MCF 10A (cell line): ENCODE measurements at regions of chr7 and their contacts with region 1.

Region 1: DNA sequence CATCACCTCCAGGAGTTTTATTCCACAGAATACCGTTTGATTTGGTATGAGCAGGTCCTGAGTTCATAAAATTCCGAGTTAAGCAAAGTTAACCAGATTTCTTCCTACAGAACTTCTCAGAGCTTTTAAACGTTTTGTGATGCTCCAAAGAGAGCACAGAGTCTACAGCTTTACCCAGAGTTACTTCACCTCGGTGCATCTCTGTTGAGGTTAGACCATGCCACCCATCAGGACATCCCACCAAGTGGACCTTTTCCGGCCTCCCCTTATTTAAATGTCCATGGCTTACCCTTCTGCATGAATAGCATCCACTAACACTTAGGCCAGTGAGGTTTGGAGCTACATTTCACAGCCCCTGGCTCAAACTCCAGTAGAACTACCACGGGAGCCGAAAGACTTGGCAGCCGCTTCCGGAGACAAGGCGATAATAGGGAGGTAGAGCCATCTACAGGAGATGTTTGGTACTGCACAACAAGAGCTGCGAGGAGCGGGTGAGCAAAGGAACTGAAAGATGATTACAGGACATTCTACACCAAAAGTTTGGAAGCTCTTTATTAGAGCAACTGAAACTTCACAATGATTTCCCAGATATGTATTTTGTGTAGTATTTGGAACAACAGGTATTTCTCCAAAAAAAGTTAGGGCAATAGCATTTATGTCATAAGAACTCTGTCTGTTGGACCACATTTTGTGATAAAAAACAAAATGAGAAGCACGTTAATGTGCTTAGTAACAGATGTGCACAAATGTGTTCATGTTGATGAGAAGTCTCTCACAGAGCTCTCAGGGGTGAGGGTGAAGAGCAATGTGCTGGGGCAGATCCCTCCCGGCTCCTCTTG is 174.7 kb downstream of the HERPUD2 start:
- DNase-seq: peak; percentile 84
- H3K4me3 Mint-ChIP-seq: no peak overlapping the region
- H3K27ac Mint-ChIP-seq: no peak overlapping the region
- H3K4me1 Mint-ChIP-seq: no peaks in the 10 kb centered on the region
- H3K27me3 Mint-ChIP-seq: peaks cover 62% of the 10 kb centered on the region
- CTCF ChIP-seq: peak; percentile 83

Region 2: GRCh38 chr7:35424869-35425495 is 95.2 kb before region 1 on chr7:
- CTCF ChIA-PET with region 1: interaction called, 49 read pairs
- POLR2A ChIA-PET with region 1: no interaction called
- intact Hi-C with region 1: loop called (anchors 1 kb)
- DNase-seq: peak; percentile 60
- H3K4me3 Mint-ChIP-seq: no peak overlapping the region
- H3K27ac Mint-ChIP-seq: no peak overlapping the region
- H3K4me1 Mint-ChIP-seq: no peaks in the 10 kb centered on the region
- H3K27me3 Mint-ChIP-seq: peaks cover 38% of the 10 kb centered on the region
- CTCF ChIP-seq: peak; percentile 70

Region 3: DNA sequence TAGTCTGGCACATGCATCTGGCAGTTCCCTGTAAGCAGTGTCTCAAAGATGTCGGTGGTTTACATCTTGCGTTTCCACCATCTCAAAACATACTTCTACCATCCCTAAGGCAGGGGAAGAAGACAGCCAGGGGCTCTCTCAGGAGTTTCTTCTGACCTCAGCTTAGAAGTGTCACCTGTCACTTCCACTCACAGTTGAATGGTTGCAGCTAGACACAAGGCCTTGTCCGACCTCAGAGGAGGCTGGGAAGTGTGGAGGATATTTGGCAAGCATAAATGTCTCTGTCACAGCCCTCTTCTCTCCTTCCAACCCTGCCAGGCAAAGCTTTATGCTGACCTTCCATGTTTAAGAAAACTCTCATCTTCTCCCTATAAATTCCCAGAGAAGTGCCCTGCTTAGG is 18.5 kb before region 1 on chr7:
- CTCF ChIA-PET with region 1: interaction called, 10 read pairs
- POLR2A ChIA-PET with region 1: no interaction called
- intact Hi-C with region 1: no loop called
- DNase-seq: no peak
- H3K4me3 Mint-ChIP-seq: no peak overlapping the region
- H3K27ac Mint-ChIP-seq: no peak overlapping the region
- H3K4me1 Mint-ChIP-seq: no peaks in the 10 kb centered on the region
- H3K27me3 Mint-ChIP-seq: peaks cover 23% of the 10 kb centered on the region
- CTCF ChIP-seq: no peak

Region 4: DNA sequence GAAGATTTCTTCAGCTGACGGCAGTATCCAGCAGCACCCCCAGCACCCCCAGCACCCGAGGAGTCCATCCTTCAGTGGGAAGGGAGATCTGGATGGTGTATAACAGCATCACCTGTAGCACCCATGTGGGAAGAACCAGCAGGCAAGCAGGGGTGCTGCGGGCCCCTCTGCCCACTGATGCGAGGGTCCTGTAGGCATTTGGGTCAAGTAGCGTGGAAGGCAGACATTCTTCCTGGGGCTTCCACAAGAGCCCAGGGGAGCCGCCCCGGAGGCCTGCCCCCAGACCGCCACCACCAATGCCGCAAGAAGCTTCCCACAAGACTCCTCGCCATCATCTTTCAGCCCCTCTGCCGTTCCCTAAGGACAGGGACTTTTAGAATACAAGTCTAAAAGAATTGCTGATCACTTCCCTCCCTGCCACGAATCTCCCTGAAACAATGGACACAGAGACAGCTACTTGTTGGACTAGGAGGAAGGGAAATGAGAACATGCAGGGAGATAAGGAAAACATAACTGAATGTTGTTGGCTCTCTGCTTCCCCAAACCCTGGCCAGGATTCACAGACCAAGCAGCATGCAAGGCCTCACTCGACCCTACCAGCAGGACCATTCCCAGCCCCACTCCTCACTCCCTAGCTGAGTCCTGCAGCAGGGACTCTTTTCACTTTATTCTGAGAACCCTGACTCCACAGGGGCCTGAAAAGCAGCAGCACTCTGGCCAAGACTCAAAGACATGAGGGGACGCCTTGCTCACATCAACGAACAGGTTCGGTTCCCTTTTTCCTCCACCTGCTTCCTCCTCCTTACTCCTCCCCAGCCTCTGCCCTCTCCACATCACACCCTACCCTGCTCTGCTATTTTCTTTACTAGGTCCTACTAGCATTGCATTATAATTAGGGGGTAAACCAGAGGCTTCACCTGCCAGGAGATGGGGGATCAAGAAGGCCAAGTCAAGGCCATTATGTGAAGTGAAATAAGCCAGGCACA is 10.2 kb after region 1 on chr7:
- CTCF ChIA-PET with region 1: interaction called, 14 read pairs
- POLR2A ChIA-PET with region 1: no interaction called
- intact Hi-C with region 1: no loop called
- DNase-seq: no peak
- H3K4me3 Mint-ChIP-seq: no peak overlapping the region
- H3K27ac Mint-ChIP-seq: no peak overlapping the region
- H3K4me1 Mint-ChIP-seq: no peaks in the 10 kb centered on the region
- H3K27me3 Mint-ChIP-seq: peaks cover 43% of the 10 kb centered on the region
- CTCF ChIP-seq: no peak

Region 5: DNA sequence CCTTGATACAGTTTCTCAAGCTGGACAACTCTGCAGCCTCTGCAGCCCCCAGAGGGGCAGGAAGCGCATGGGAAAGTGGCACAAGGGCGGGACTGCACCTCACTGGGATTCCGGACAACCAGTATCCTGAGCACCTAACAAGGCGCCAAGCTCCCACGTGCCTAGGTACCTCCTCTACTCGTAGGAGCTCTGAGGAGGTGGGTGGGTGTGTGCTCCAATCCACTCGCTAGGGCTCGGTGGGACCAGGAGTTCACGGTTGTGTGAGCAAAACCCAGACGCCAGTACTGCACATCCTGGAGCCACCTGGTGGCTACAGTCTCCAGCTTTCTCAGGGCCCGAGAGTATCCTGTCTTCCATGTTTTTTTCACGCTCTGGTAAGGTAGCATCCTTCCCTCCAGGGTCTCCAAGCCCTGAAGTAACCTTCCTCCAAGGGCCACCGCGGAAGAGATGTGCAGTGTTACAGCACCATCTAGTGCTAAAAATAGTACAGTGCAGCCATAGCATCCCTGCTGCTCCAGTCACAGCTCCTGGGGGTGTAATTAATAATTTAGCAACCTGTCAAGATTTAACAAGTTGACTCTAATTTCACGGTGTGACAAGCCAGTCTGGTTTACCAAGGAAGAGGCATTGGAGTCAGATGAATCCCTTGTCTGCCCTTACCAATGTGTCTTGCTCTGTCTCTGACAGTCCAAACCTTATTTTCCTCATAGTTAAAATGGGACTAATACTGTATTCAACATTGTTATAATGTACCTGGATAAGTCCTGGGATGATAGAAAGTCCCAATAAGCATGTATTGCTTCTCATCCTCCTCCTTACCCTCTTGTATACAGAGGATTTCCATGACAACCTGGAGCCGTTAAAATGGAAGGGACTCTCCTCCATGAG is 104.4 kb after region 1 on chr7:
- CTCF ChIA-PET with region 1: interaction called, 10 read pairs
- POLR2A ChIA-PET with region 1: no interaction called
- intact Hi-C with region 1: loop called (anchors 2 kb)
- DNase-seq: peak; percentile 51
- H3K4me3 Mint-ChIP-seq: no peak overlapping the region
- H3K27ac Mint-ChIP-seq: no peak overlapping the region
- H3K4me1 Mint-ChIP-seq: no peaks in the 10 kb centered on the region
- H3K27me3 Mint-ChIP-seq: no peaks in the 10 kb centered on the region
- CTCF ChIP-seq: peak; percentile 85

Region 6: DNA sequence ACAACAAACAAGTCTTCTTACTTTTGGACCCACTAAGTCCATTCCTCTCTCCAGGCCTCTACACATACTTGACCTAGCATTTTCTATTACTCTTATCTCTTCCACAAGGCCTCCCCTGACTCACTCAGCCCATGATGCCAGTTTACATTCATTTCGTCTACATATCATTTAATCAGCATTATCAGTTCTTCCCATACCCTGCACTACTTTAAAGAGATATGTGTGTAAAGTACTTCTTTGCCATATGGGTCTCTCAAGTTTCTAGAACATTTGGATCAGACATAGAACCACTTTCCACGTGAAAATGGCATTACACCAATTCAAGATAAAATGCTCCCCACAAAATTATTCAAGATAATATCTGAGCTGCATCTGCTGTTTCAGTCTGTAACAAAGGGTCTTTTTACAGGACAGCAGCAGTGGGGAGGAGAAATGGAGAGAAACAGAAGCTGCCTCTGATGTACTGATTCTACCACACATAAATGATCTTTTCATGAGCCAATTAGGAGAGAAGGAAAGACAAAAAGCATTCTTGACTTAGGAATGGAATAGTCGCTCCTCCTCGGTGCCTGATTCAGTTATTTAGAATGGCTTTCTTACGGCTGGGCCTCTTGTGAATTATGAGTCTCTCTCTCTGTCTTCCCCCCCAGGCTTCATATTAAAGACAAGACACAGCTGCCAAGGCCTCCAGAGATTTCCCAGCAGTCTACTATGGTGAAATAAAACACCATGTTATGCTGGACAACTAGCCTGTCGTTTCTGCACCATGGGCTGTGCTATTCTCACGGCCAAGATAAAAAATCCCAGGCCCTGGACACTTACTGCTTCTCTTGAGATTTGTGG is 233.8 kb after region 1 on chr7:
- CTCF ChIA-PET with region 1: no interaction called
- POLR2A ChIA-PET with region 1: no interaction called
- intact Hi-C with region 1: no loop called
- DNase-seq: no peak
- H3K4me3 Mint-ChIP-seq: no peak overlapping the region
- H3K27ac Mint-ChIP-seq: no peak overlapping the region
- H3K4me1 Mint-ChIP-seq: no peaks in the 10 kb centered on the region
- H3K27me3 Mint-ChIP-seq: no peaks in the 10 kb centered on the region
- CTCF ChIP-seq: no peak